ENCODE measurements at regions of chr11 and their contacts with region 1.

Region 1: DNA sequence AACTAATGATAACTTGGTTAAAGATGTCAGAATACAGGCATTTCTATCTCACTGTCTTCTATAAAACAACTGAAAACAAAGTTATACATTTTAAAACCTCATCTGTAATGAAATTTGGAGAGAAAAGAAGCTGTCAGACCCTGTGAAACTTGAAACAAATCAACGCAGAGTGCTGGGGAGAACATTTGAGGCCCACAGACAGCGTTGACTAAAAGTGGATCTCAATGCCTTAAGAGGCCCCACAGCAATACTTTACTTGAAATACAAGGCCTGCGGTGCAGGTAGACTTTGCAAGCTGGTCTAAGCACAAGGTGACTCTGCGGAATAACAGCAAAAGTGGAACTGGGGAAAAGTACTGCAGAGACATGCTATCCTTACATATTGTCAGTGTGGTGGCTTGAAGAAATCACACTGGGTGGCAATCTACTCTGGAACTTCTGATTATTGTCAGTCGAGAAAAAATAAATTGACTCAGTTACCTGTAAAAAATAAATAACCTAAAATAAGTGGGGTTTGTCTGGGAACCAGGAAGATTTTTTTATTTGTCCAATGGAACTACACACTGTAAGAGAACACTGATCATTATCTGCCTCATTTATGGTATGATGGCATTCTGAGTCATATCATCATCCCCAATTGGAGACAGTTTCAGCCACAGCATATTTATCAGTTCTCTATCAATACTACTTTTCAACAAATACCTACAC is 138.9 kb downstream of the LUZP2 start:
- DNase-seq: peak; percentile 90
- ATAC-seq: peak; percentile 87
- H3K4me3 ChIP-seq: peak overlapping the region; percentile 38
- H3K27ac ChIP-seq: peak overlapping the region; percentile 100
- H3K4me1 ChIP-seq: peaks cover 36% of the 10 kb centered on the region
- H3K27me3 ChIP-seq: no peaks in the 10 kb centered on the region
- CTCF ChIP-seq: 0 out of 2 replicates have a peak, but pooled peaks have one; percentile 24

Region 2: DNA sequence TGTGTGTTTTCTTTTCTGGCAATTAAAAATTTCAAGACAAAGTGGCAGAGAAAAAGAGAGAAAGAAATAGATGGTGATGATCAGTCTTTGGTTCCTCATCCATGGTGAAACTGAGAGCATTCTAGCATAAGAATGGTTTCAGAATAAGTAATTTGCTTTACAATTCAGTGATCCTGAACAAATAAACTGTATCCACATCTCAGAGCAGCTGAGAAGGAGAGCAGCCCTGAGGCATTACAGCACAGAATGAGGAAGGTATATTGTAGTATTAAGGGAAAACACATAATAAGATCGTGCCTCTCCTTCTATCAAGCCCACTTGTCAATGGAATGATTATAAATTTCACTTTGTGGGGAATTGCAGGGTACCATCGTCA is 121.5 kb before region 1 on chr11:
- CTCF ChIA-PET with region 1: interaction called, 3 read pairs
- POLR2A ChIA-PET with region 1: no interaction called
- intact Hi-C with region 1: loop called (anchors 5 kb)
- DNase-seq: peak; percentile 58
- ATAC-seq: peak; percentile 60
- H3K4me3 ChIP-seq: no peak overlapping the region
- H3K27ac ChIP-seq: no peak overlapping the region
- H3K4me1 ChIP-seq: peaks cover 39% of the 10 kb centered on the region
- H3K27me3 ChIP-seq: no peaks in the 10 kb centered on the region
- CTCF ChIP-seq: no peak

Region 3: GRCh38 chr11:24588075-24588474 is 47.7 kb before region 1 on chr11:
- CTCF ChIA-PET with region 1: no interaction called
- POLR2A ChIA-PET with region 1: no interaction called
- intact Hi-C with region 1: loop called (anchors 5 kb)
- DNase-seq: peak; percentile 71
- ATAC-seq: peak; percentile 60
- H3K4me3 ChIP-seq: 0 out of 2 replicates have a peak overlapping the region, but pooled peaks have one; percentile 10
- H3K27ac ChIP-seq: peak overlapping the region; percentile 39; the same call in 1 of the 2 replicates
- H3K4me1 ChIP-seq: peaks cover 38% of the 10 kb centered on the region
- H3K27me3 ChIP-seq: no peaks in the 10 kb centered on the region
- CTCF ChIP-seq: no peak

Region 4: GRCh38 chr11:24661331-24661730 is 25.6 kb after region 1 on chr11:
- CTCF ChIA-PET with region 1: no interaction called
- POLR2A ChIA-PET with region 1: no interaction called
- intact Hi-C with region 1: no loop called
- DNase-seq: no peak
- ATAC-seq: no peak
- H3K4me3 ChIP-seq: no peak overlapping the region
- H3K27ac ChIP-seq: no peak overlapping the region
- H3K4me1 ChIP-seq: no peaks in the 10 kb centered on the region
- H3K27me3 ChIP-seq: no peaks in the 10 kb centered on the region
- CTCF ChIP-seq: no peak

Region 5: DNA sequence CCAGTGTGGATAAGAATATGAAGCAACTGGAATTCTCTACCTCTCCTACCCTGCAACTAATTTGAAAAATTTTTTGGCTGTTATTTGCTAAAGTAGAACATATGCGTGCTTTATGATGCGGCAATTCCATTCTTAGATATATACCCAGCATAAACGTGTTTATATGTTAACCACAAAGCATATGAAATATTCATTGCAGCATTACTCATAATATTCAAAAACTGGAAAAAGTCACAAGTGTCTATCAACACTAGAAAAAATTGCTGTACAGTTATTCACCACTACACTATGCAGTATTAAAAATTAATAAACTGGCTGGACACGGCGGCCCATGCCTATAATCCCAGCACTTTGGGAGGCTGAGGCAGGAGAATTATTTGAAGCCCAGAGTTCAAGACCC is 87.5 kb after region 1 on chr11:
- CTCF ChIA-PET with region 1: no interaction called
- POLR2A ChIA-PET with region 1: no interaction called
- intact Hi-C with region 1: loop called (anchors 1 kb)
- DNase-seq: peak; percentile 62
- ATAC-seq: peak; percentile 93
- H3K4me3 ChIP-seq: no peak overlapping the region
- H3K27ac ChIP-seq: peak overlapping the region; percentile 54
- H3K4me1 ChIP-seq: peaks cover 8% of the 10 kb centered on the region; the same call in 1 of the 2 replicates
- H3K27me3 ChIP-seq: no peaks in the 10 kb centered on the region
- CTCF ChIP-seq: no peak

Measured in PC-3 (cell line).